Aorta (tissue), 5 donors: ENCODE measurements at regions of chr3 and their contacts with region 1.

Region 1: GRCh38 chr3:3126477-3127431 is at the start of gene TRNT1:
- DNase-seq: peak; percentile 98 to 99
- ATAC-seq: peak; percentile 99
- H3K4me3 ChIP-seq: peak within 1 kb of the TSS; percentile 74 to 95
- H3K27ac ChIP-seq: peak within 1 kb of the TSS; percentile 45 to 92
- H3K4me1 ChIP-seq: peaks cover 0 to 2% of the 10 kb centered on the region in 2 donors
- H3K27me3 ChIP-seq: no peaks in the 10 kb centered on the region
- total RNA-seq, gene TRNT1: 25.8 to 30.0 TPM

Region 2: DNA sequence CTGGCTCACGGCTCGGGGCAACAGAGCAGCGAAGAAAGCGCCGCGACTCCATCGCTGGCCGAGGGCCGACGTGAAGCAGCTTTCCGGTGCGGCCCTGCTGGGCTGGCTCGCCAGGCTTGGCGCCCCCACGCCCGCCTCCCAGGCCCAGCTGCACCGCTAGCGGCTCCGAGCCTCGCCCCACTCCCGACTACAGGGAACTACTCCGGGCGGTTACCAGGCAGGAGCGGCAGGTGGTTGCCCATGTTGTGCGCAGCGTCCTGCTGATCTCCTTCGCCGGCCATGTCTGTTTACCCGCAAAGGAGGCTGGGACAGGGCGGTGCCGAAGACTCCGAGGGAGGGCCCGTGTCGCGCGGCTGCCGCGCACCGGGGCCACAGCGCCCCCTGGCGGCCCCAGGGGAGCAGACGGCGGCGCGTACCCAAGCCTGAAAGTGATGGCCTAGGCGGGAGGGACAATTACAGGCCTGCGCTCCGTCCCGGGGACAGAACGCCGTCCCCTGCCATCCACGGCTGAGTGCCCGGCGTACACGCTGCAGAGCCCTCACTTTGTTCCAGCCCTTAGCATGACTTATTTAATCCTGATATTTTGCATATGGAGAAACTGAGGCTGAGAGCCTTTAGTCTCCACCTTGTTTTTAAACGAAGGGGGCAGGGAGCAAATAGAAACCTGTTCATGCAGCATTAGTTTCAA is 52.8 kb after region 1 on chr3 and contains the start of gene CRBN:
- intact Hi-C with region 1: loop called in 1 of 2 experiments (anchors 5 kb)
- DNase-seq: peak; percentile 93 to 95
- ATAC-seq: peak; percentile 98
- H3K4me3 ChIP-seq: peak within 1 kb of the TSS; percentile 61 to 97
- H3K27ac ChIP-seq: peak within 1 kb of the TSS in 1 of 2 donors; percentile 11
- H3K4me1 ChIP-seq: peaks cover 0 to 6% of the 10 kb centered on the region in 2 donors
- H3K27me3 ChIP-seq: no peaks in the 10 kb centered on the region
- total RNA-seq, gene CRBN: 43.2 to 68.5 TPM